ENCODE measurements at regions of chr4 and their contacts with region 1.

Region 1: DNA sequence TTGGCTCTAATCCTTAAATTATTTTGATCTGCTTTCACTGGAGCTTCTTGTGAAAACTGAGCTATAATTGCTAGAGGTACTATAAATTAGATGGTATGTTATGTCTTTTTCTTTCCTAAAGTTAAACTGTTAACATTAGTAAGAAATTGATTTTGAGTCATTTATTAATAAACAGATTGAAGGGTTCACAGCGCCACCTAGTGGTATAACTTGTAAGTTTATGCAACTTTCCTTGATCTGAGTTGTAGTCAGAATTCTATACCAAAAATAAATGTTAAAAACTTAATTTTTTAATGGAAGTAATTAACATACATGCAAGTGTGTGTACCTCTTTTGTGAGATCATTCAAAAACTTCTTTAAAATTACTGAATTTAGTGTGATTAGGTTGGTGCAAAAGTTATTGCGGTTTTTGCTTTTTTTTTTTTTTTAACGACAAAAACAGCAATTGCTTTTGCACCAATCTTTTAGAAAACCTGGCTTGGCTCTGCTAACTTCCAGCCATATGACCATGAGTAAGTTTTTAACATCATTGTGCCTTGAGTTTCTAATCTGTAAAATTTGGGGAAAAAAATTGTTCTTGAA is 151.5 kb downstream of the CENPC start:
- DNase-seq: peak; percentile 78
- ATAC-seq: no peak
- H3K4me3 ChIP-seq: no peak overlapping the region
- H3K27ac ChIP-seq: no peak overlapping the region
- H3K4me1 ChIP-seq: no peaks in the 10 kb centered on the region
- H3K27me3 ChIP-seq: peaks cover 28% of the 10 kb centered on the region
- CTCF ChIP-seq: peak; percentile 96

Region 2: DNA sequence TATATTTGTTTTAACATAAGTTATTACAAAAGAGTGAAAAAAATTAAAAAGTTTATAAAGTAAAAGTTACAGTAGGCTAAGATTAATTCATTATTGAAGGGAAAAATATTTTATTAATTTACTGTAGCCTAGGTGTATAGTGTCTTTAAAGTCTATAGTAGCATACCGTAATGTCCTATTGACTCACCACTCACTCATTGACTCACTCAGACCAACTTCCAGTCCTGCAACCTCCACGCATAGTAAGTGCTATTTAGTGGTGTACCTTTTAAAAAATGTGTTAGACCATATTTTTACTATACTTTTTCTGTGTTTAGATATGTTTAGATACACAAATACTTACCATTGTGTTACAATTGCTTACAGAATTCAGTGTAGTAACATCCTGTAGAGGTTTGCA is 689.5 kb before region 1 on chr4:
- CTCF ChIA-PET with region 1: no interaction called
- POLR2A ChIA-PET with region 1: no interaction called
- intact Hi-C with region 1: loop called (anchors 10 kb)
- DNase-seq: peak; percentile 65
- ATAC-seq: peak; percentile 91
- H3K4me3 ChIP-seq: no peak overlapping the region
- H3K27ac ChIP-seq: no peak overlapping the region
- H3K4me1 ChIP-seq: no peaks in the 10 kb centered on the region
- H3K27me3 ChIP-seq: no peaks in the 10 kb centered on the region
- CTCF ChIP-seq: no peak

Region 3: DNA sequence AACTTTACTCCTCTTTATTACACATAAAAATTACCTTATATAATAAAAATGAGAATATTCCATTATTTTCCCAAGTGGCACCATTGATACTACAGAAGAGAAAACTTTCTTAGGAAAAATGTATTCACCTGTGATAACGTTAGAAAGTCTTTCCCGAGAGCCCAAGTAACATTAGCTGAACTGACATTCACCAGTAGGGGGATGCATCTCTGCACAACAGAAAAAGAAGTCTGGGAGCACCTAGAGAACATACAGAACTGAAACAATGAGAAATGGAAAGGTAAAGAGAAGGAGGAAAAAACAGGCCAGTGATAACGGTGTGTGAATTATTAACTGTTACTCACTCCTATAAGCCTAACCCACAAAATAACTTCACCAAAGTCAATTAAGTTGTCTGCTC is 271.8 kb before region 1 on chr4:
- CTCF ChIA-PET with region 1: no interaction called
- POLR2A ChIA-PET with region 1: no interaction called
- intact Hi-C with region 1: loop called (anchors 10 kb)
- DNase-seq: peak; percentile 66
- ATAC-seq: peak; percentile 93
- H3K4me3 ChIP-seq: no peak overlapping the region
- H3K27ac ChIP-seq: no peak overlapping the region
- H3K4me1 ChIP-seq: no peaks in the 10 kb centered on the region
- H3K27me3 ChIP-seq: no peaks in the 10 kb centered on the region
- CTCF ChIP-seq: peak; percentile 81

Measured in PC-3 (cell line).